HEK293 (cell line): ENCODE measurements at regions of chr17 and their contacts with region 1.

Region 1: GRCh38 chr17:56592487-56593085 is 913 bp upstream of the NOG start:
- H3K4me3 ChIP-seq: peak overlapping the region; percentile 49
- H3K27ac ChIP-seq: peak overlapping the region; percentile 63
- H3K4me1 ChIP-seq: peaks cover 12% of the 10 kb centered on the region
- CTCF ChIP-seq: no peak; the same call in 1 of the 2 replicates

Region 2: DNA sequence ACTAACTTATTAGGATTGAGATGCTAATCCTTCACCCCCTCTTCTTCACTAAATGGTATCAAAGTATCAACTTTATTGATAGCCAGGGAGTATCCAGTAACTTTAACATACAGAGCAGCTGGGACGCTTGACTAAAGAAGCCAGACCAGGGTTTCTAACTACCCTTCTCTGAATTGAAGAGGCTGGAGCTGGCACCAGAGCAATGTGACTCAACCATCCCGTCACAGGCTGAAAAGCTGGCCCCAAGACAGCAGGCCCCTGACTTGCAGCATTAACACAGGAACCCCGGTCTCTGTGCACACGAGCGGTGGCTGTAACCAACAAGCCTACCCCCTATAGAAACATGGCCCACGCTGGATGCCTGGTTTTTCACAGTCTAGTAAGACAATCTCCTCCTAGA is 379.6 kb before region 1 on chr17:
- CTCF ChIA-PET with region 1: no interaction called
- POLR2A ChIA-PET with region 1: no interaction called
- H3K4me3 ChIP-seq: no peak overlapping the region
- H3K27ac ChIP-seq: no peak overlapping the region
- H3K4me1 ChIP-seq: no peaks in the 10 kb centered on the region
- CTCF ChIP-seq: no peak

Region 3: GRCh38 chr17:56577190-56577842 is 15.3 kb before region 1 on chr17:
- CTCF ChIA-PET with region 1: interaction called, 11 read pairs
- POLR2A ChIA-PET with region 1: no interaction called
- H3K4me3 ChIP-seq: no peak overlapping the region
- H3K27ac ChIP-seq: no peak overlapping the region
- H3K4me1 ChIP-seq: no peaks in the 10 kb centered on the region
- CTCF ChIP-seq: no peak

Region 4: DNA sequence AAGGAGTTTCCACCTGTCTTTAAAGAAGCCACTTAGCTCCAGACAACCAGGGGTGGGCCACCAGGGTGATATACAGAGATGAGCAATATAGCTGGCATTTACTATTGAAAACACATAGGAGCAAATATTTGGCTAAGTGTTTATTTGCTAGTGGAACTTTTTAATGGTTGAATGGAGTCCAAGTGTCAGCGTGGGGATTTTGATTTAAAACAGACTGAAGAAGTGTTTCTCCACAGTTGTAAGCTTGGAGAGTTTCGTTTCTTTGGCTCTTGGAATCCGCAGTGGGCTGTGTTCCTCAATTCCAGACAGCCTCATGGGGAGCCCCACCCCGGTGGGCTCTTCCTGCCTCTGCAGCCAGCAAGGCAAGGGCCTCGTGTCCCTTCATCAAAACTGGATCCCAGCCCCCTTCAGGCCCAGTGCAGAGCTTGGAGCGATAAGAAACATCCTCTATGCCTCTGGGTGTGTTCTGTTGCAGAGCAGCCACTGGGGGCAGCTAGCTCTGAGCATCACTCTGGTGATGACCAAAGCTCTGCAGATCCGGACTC is 37.0 kb after region 1 on chr17:
- CTCF ChIA-PET with region 1: interaction called, 10 read pairs
- POLR2A ChIA-PET with region 1: interaction called, 5 read pairs
- H3K4me3 ChIP-seq: no peak overlapping the region
- H3K27ac ChIP-seq: no peak overlapping the region
- H3K4me1 ChIP-seq: no peaks in the 10 kb centered on the region
- CTCF ChIP-seq: peak; percentile 59

Region 5: DNA sequence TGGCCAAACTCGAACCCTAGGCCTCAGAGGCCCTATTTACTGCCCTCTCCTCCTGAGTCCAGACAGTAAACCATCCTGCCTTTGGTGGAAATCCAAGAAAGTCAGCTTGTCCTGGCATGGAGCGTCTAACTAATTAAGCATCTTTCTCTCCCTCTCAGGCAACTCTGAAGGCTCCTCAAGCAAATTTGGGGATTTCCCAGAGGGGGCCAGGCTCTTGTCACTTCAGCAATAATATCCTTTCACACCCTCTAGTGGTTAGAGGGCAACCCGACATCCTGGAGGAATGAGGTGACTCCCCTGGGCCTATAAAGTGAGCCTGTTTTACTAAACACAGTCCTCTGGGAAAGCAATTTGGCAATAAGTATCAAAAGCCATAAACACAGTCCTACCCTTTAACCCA is 61.3 kb after region 1 on chr17:
- CTCF ChIA-PET with region 1: interaction called, 37 read pairs
- POLR2A ChIA-PET with region 1: interaction called, 3 read pairs
- H3K4me3 ChIP-seq: no peak overlapping the region
- H3K27ac ChIP-seq: no peak overlapping the region
- H3K4me1 ChIP-seq: no peaks in the 10 kb centered on the region
- CTCF ChIP-seq: peak; percentile 39; the same call in 1 of the 2 replicates

Region 6: DNA sequence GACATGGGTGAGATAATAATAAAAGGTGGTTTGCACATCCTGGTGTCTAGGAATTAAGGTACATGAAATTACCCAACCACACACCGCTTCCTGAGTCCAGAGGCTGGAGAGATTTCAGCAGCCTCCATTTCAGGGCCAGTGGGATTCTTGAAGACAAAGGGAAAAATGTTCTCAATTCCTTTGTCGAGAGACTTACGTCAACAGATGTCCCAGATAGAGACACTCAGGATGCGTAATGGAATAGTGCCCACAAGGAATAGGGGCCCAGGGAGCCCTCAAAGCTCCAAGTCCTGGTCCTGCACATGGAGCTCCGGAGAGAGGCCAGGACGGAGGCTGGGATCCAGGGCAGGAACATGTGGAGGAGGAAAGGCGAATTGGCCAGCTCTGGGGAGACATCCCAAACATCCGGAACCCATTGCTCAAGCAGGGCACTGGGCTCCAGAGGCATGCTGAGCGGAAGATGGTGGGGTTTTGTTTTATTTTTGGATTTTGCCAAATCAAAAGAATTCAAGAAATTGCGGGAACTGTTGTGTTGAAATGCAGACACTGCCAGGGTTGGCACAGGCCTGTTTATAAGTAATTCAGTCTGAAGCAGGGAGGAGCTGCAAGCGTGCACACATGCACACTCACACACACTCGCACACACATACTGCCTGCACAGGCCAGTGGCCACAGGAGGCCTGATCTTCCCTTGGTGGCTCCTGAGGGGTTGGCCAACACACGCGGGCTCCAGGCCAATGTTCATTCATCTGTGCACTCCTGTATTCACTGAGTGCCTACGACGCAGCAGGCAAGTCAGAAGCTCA is 98.1 kb after region 1 on chr17:
- CTCF ChIA-PET with region 1: interaction called, 20 read pairs
- POLR2A ChIA-PET with region 1: no interaction called
- H3K4me3 ChIP-seq: no peak overlapping the region
- H3K27ac ChIP-seq: no peak overlapping the region
- H3K4me1 ChIP-seq: no peaks in the 10 kb centered on the region
- CTCF ChIP-seq: no peak

Region 7: GRCh38 chr17:56699186-56699895 is 106.8 kb after region 1 on chr17:
- CTCF ChIA-PET with region 1: interaction called, 20 read pairs
- POLR2A ChIA-PET with region 1: interaction called, 14 read pairs
- H3K4me3 ChIP-seq: no peak overlapping the region
- H3K27ac ChIP-seq: 0 out of 2 replicates have a peak overlapping the region, but pooled peaks have one; percentile 18
- H3K4me1 ChIP-seq: 0 out of 2 replicates have a peak, but pooled peaks cover 4% of the 10 kb centered on the region
- CTCF ChIP-seq: no peak